Colonic mucosa (tissue), 4 donors: ENCODE measurements at regions of chr14 and their contacts with region 1.

Region 1: DNA sequence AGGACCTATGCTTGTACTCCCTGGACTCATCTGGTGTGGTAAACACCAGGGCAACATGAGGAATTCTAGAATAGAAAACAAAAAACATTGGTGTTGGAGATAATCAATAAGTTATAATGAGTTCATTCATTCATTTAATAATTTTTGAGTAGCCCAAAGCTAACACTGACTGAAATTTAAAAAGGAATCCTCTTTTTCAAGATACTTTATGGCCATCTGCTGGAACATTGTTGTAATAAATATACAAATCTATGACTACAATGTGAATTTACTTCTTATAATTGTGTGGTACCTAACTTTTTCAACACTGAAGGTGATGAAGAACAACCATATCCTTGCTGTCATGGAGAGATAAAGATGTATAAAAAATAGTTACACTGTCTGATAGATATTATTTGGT is 687.3 kb upstream of the MIS18BP1 start:
- DNase-seq: no peak
- H3K4me3 ChIP-seq: no peak overlapping the region
- H3K27ac ChIP-seq: no peak overlapping the region
- H3K4me1 ChIP-seq: no peaks in the 10 kb centered on the region
- H3K27me3 ChIP-seq: no peaks in the 10 kb centered on the region
- CTCF ChIP-seq: peak; percentile 19

Region 2: GRCh38 chr14:45610318-45610717 is 330.0 kb before region 1 on chr14:
- intact Hi-C with region 1: loop called (anchors 5 kb)
- DNase-seq: no peak
- H3K4me3 ChIP-seq: no peak overlapping the region
- H3K27ac ChIP-seq: no peak overlapping the region
- H3K4me1 ChIP-seq: no peaks in the 10 kb centered on the region
- H3K27me3 ChIP-seq: no peaks in the 10 kb centered on the region
- CTCF ChIP-seq: peak; percentile 24

Region 3: GRCh38 chr14:46596236-46596635 is 655.9 kb after region 1 on chr14:
- intact Hi-C with region 1: no loop called
- DNase-seq: no peak
- H3K4me3 ChIP-seq: no peak overlapping the region
- H3K27ac ChIP-seq: no peak overlapping the region
- H3K4me1 ChIP-seq: no peaks in the 10 kb centered on the region
- H3K27me3 ChIP-seq: no peaks in the 10 kb centered on the region
- CTCF ChIP-seq: no peak